Right lobe of liver (tissue), 6 donors: ENCODE measurements at regions of chr7 and their contacts with region 1.

Region 1: GRCh38 chr7:4681886-4682620 is at the start of gene FOXK1:
- DNase-seq: peak; percentile 71 to 83 (median 76)
- ATAC-seq: peak; percentile 71 to 90 (median 86)
- H3K4me3 ChIP-seq: peak within 1 kb of the TSS; percentile 82 to 84 (median 82)
- H3K27ac ChIP-seq: peak within 1 kb of the TSS; percentile 75 to 90 (median 76)
- H3K4me1 ChIP-seq: peaks cover 0 to 5% (median 0%) of the 10 kb centered on the region in 4 donors
- H3K27me3 ChIP-seq: no peaks in the 10 kb centered on the region
- CTCF ChIP-seq: peak in 1 of 4 donors; percentile 28
- POLR2A ChIP-seq: peak; percentile 72
- total RNA-seq, gene FOXK1: 3.8 to 8.4 (median 6.9) TPM

Region 2: GRCh38 chr7:4641667-4642467 is 40.2 kb before region 1 on chr7:
- intact Hi-C with region 1: loop called (anchors 5 kb)
- DNase-seq: peak; percentile 94 to 96 (median 95)
- ATAC-seq: peak; percentile 94 to 97 (median 95)
- H3K4me3 ChIP-seq: peak overlapping the region; percentile 58 to 75 (median 73)
- H3K27ac ChIP-seq: peak overlapping the region; percentile 87 to 92 (median 91)
- H3K4me1 ChIP-seq: peaks cover 0 to 2% (median 0%) of the 10 kb centered on the region in 4 donors
- H3K27me3 ChIP-seq: no peaks in the 10 kb centered on the region
- CTCF ChIP-seq: peak; percentile 43 to 71 (median 46)
- POLR2A ChIP-seq: peak; percentile 77

Region 3: GRCh38 chr7:4753711-4754432 is 71.8 kb after region 1 on chr7:
- intact Hi-C with region 1: loop called in 1 of 2 experiments (anchors 5 kb)
- DNase-seq: peak; percentile 84 to 88 (median 87)
- ATAC-seq: peak; percentile 91 to 97 (median 93)
- H3K4me3 ChIP-seq: no peak overlapping the region
- H3K27ac ChIP-seq: no peak overlapping the region
- H3K4me1 ChIP-seq: no peaks in the 10 kb centered on the region
- H3K27me3 ChIP-seq: no peaks in the 10 kb centered on the region
- CTCF ChIP-seq: peak; percentile 86 to 93 (median 92)
- POLR2A ChIP-seq: no peak